BJ (cell line): ENCODE measurements at regions of chr15 and their contacts with region 1.

Region 1: GRCh38 chr15:73697033-73697467 is 12.9 kb downstream of the CD276 start:
- DNase-seq: no peak
- H3K4me3 ChIP-seq: no peak overlapping the region
- H3K27me3 ChIP-seq: no peaks in the 10 kb centered on the region
- CTCF ChIP-seq: no peak

Region 2: GRCh38 chr15:73560501-73561117 is 136.4 kb before region 1 on chr15:
- CTCF ChIA-PET with region 1: interaction called, 48 read pairs
- POLR2A ChIA-PET with region 1: no interaction called
- DNase-seq: no peak
- H3K4me3 ChIP-seq: no peak overlapping the region
- H3K27me3 ChIP-seq: no peaks in the 10 kb centered on the region
- CTCF ChIP-seq: peak; percentile 50

Region 3: DNA sequence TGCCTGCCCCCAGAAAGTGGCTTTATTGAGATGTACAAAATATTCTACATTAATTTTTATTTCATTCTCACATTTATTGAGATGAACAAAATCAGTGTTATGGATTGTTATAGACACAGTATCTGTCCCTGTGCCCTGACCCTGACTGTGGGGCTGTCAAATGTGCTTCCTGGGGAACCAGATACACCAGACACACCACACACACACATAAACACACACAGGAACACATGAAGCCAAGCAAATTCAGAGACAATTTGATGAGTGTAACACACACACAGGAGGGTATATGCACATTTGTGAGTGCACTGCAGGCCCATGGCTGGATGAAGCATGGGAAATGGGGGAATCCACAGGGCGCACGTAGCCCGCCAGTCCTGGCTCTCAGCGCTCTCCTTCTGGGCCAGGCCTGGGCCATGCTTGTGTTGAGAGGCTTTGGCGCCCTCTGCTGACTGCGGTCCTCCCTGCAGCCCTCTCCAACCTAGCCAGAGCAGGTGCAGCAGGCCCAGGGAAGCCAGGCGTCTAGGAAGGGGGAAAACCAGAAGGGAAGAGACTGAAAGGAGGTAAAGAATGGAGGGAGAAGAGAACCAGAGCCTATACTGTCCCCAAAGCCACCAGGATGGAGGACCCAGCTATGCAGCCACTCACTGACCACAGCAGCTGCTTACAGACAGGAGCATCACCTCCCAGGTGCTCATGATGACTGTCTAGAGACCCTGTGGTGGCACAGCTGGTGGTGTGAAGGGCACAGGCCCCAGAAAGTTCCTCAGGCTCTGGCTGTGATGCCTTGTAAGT is 211.2 kb after region 1 on chr15:
- CTCF ChIA-PET with region 1: no interaction called
- POLR2A ChIA-PET with region 1: no interaction called
- DNase-seq: no peak
- H3K4me3 ChIP-seq: no peak overlapping the region
- H3K27me3 ChIP-seq: no peaks in the 10 kb centered on the region
- CTCF ChIP-seq: peak; percentile 97